ENCODE measurements at regions of chr5 and their contacts with region 1.

Region 1: GRCh38 chr5:173144200-173145176 is at the start of gene BNIP1:
- DNase-seq: peak; percentile 94 to 98 (median 95)
- ATAC-seq: peak; percentile 87 to 97 (median 94)
- H3K4me3 ChIP-seq: peak within 1 kb of the TSS; percentile 68 to 100 (median 88)
- H3K27ac ChIP-seq: peak within 1 kb of the TSS; percentile 58 to 94 (median 89)
- H3K4me1 ChIP-seq: peaks cover 0 to 14% (median 5%) of the 10 kb centered on the region in 12 donors
- H3K27me3 ChIP-seq: no peaks in the 10 kb centered on the region
- CTCF ChIP-seq: peak; percentile 90 to 99 (median 94)
- POLR2A ChIP-seq: no peak
- total RNA-seq, gene BNIP1: 8.0 to 11.7 (median 8.9) TPM

Region 2: DNA sequence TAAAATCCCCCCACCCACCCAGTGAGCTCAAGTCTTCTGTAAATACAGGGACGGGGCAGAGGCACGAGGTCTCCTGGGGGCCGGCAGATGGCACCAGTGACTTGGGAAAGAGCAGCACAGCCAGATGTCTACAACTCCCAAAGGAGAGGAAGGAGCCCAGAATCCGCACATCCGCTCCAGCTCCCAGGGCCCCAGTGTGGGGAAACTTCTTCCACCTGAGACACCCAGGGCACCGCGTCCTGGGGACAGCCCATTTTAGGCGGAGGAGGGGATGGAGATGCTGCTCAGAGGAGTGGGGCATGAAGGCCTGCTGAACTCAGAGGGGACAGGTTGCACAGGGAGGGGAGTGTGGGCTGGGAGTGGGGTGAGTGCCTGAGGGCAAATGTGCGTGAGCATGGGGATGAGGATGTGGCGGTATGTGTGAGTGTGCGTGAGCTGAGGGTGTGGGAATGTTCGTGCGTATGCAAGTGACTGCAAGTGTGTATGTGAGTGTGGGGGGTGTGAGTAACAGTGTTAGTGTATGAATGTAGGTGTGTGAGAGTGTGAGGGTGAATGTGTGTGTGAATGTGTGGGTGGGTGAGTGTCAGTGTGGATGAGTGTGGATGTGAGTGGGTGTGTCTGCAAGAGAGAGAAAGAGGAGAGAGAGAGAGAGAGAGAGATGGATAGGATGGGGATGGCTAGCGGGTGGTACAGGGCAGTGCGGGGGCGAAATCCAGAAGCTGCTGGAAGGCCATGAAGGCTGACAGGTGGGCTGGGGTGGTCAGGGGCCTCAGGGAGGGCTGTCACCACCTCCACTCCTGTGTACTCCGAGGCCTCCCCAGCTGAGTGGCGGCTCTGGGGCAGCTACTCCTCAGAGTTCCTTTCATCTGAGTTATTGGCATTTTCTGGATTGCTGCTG is 437.0 kb before region 1 on chr5:
- intact Hi-C with region 1: loop called in 1 of 10 experiments (anchors 10 kb)
- DNase-seq: peak in 2 of 5 donors; percentile 57 to 65
- ATAC-seq: peak; percentile 28 to 78 (median 76)
- H3K4me3 ChIP-seq: no peak overlapping the region
- H3K27ac ChIP-seq: no peak overlapping the region
- H3K4me1 ChIP-seq: no peaks in the 10 kb centered on the region
- H3K27me3 ChIP-seq: no peaks in the 10 kb centered on the region
- CTCF ChIP-seq: peak; percentile 13 to 54 (median 40)
- POLR2A ChIP-seq: no peak

Region 3: GRCh38 chr5:172984243-172984953 is 160.1 kb before region 1 on chr5:
- intact Hi-C with region 1: loop called in 7 of 10 experiments (anchors 2 to 10 kb)
- DNase-seq: peak in 4 of 5 donors; percentile 51 to 66 (median 56)
- ATAC-seq: peak; percentile 13 to 72 (median 60)
- H3K4me3 ChIP-seq: peak overlapping the region; percentile 71 to 99 (median 88)
- H3K27ac ChIP-seq: peak overlapping the region; percentile 81 to 98 (median 94)
- H3K4me1 ChIP-seq: peaks cover 0 to 53% (median 16%) of the 10 kb centered on the region in 12 donors
- H3K27me3 ChIP-seq: no peaks in the 10 kb centered on the region
- CTCF ChIP-seq: peak in 10 of 12 donors; percentile 6 to 44 (median 30)
- POLR2A ChIP-seq: no peak

Region 4: GRCh38 chr5:173001229-173001841 is 143.2 kb before region 1 on chr5:
- intact Hi-C with region 1: loop called in 3 of 10 experiments (anchors 10 kb)
- DNase-seq: no peak
- ATAC-seq: no peak
- H3K4me3 ChIP-seq: no peak overlapping the region
- H3K27ac ChIP-seq: no peak overlapping the region
- H3K4me1 ChIP-seq: peaks cover 0 to 60% (median 35%) of the 10 kb centered on the region in 12 donors
- H3K27me3 ChIP-seq: no peaks in the 10 kb centered on the region
- CTCF ChIP-seq: no peak
- POLR2A ChIP-seq: no peak

Region 5: GRCh38 chr5:173016621-173017047 is 127.9 kb before region 1 on chr5:
- intact Hi-C with region 1: loop called in 2 of 10 experiments (anchors 10 kb)
- DNase-seq: peak in 3 of 5 donors; percentile 36 to 50 (median 41)
- ATAC-seq: peak; percentile 66 to 87 (median 86)
- H3K4me3 ChIP-seq: peak overlapping the region in 2 of 12 donors; percentile 2 to 17
- H3K27ac ChIP-seq: peak overlapping the region in 11 of 12 donors; percentile 46 to 88 (median 78)
- H3K4me1 ChIP-seq: peaks cover 5 to 81% (median 34%) of the 10 kb centered on the region in 12 donors
- H3K27me3 ChIP-seq: no peaks in the 10 kb centered on the region
- CTCF ChIP-seq: no peak
- POLR2A ChIP-seq: no peak

Region 6: GRCh38 chr5:173057062-173057924 is 87.2 kb before region 1 on chr5:
- intact Hi-C with region 1: loop called in 2 of 10 experiments (anchors 5 to 10 kb)
- DNase-seq: peak; percentile 98 to 100 (median 99)
- ATAC-seq: peak; percentile 97 to 98 (median 98)
- H3K4me3 ChIP-seq: peak overlapping the region; percentile 68 to 100 (median 97)
- H3K27ac ChIP-seq: peak overlapping the region; percentile 86 to 99 (median 96)
- H3K4me1 ChIP-seq: peaks cover 6 to 46% (median 35%) of the 10 kb centered on the region in 12 donors
- H3K27me3 ChIP-seq: no peaks in the 10 kb centered on the region
- CTCF ChIP-seq: peak in 3 of 12 donors; percentile 6 to 38 (median 25)
- POLR2A ChIP-seq: peak in 1 of 2 donors; percentile 59

Region 7: DNA sequence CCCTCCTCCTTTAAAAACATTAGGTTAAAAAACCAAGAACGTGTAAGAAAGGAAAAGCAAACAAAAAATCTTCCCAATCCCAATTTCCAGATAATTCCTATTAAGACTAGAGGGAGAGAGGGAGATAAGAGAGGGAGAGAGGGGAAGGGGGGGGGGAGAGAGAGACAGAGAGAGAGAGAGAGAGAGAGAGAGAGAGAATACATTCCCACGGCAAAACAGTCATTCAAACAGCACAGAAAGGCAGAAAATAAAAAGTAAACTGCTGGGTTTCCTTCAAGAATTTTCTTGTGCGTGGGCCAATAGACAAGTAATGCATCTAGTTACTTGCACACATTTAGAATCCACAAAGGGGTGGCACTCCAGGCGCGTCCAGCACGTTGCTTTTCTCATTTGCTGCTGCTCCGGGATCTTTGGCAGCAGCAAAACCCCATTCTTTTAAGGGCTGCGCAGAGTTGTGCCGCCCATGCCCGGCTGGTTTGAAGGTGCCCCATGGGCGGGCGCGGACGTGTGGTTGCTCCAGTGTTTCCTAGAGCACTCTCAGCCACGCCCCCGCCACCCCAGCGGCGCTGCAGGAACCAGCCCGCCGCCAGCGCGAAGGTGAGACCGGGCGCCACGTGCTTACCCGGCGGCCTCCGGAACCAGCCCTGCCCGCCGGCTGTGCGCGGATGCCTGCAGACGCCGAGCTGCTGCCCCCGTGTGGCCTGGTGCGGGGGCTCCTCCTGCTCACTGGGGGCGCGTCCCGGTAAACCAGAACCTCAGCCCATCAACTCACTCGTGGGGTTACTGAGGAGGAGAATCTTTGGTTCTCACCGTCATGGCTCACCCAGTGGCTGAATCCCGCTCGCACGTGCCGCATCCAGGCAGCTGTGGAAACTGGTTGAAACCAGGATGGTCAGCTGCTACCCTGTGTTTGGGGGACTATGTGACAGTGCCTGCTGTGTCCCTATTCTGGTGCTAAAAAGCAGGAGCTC is 139.1 kb after region 1 on chr5:
- intact Hi-C with region 1: loop called in 1 of 10 experiments (anchors 2 kb)
- DNase-seq: peak; percentile 78 to 92 (median 87)
- ATAC-seq: peak; percentile 49 to 89 (median 89)
- H3K4me3 ChIP-seq: peak overlapping the region in 10 of 12 donors; percentile 16 to 45 (median 36)
- H3K27ac ChIP-seq: peak overlapping the region in 8 of 12 donors; percentile 12 to 74 (median 63)
- H3K4me1 ChIP-seq: peaks cover 0 to 27% (median 4%) of the 10 kb centered on the region in 12 donors
- H3K27me3 ChIP-seq: peaks cover 0 to 45% (median 5%) of the 10 kb centered on the region in 9 donors
- CTCF ChIP-seq: peak; percentile 70 to 91 (median 73)
- POLR2A ChIP-seq: no peak

Region 8: GRCh38 chr5:173293817-173294672 is 149.6 kb after region 1 on chr5:
- intact Hi-C with region 1: no loop called
- DNase-seq: peak; percentile 60 to 86 (median 72)
- ATAC-seq: peak; percentile 11 to 65 (median 46)
- H3K4me3 ChIP-seq: peak overlapping the region in 5 of 12 donors; percentile 5 to 32 (median 11)
- H3K27ac ChIP-seq: no peak overlapping the region
- H3K4me1 ChIP-seq: peaks cover 0 to 21% (median 8%) of the 10 kb centered on the region in 12 donors
- H3K27me3 ChIP-seq: peaks cover 0 to 28% (median 0%) of the 10 kb centered on the region in 9 donors
- CTCF ChIP-seq: peak; percentile 77 to 96 (median 86)
- POLR2A ChIP-seq: no peak

Measured in heart left ventricle (tissue), 16 donors.